Gastrocnemius medialis (tissue), 4 donors: ENCODE measurements at regions of chr1 and their contacts with region 1.

Region 1: GRCh38 chr1:159632922-159633321 is 45.3 kb downstream of the APCS start:
- DNase-seq: no peak
- ATAC-seq: no peak
- H3K4me3 ChIP-seq: no peak overlapping the region
- H3K27ac ChIP-seq: no peak overlapping the region
- H3K4me1 ChIP-seq: no peaks in the 10 kb centered on the region
- H3K27me3 ChIP-seq: no peaks in the 10 kb centered on the region
- CTCF ChIP-seq: no peak
- POLR2A ChIP-seq: no peak

Region 2: GRCh38 chr1:159492575-159493323 is 140.2 kb before region 1 on chr1:
- in situ Hi-C with region 1: no loop called
- intact Hi-C with region 1: no loop called
- DNase-seq: no peak
- ATAC-seq: no peak
- H3K4me3 ChIP-seq: no peak overlapping the region
- H3K27ac ChIP-seq: no peak overlapping the region
- H3K4me1 ChIP-seq: no peaks in the 10 kb centered on the region
- H3K27me3 ChIP-seq: no peaks in the 10 kb centered on the region
- CTCF ChIP-seq: no peak
- POLR2A ChIP-seq: no peak

Region 3: DNA sequence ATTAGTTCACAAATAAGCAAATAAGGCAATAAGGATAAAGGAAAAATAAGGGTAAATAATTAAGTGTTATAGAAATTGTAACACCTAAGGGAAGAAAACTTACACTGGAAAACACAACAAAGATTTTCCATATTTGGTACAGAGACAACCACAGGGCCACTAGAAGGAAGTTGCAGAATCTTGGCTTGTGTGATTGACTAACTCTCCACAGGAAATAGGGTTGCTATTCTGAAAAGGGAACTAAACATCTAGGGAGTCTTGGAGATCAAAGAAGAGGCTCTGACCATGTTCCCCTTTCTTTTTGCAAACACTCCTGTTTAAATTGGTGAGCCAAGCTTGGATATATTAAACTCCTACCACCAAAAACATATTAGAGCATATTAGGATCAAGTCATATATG is 13.8 kb after region 1 on chr1:
- in situ Hi-C with region 1: no loop called
- intact Hi-C with region 1: no loop called
- DNase-seq: no peak
- ATAC-seq: no peak
- H3K4me3 ChIP-seq: no peak overlapping the region
- H3K27ac ChIP-seq: no peak overlapping the region
- H3K4me1 ChIP-seq: no peaks in the 10 kb centered on the region
- H3K27me3 ChIP-seq: no peaks in the 10 kb centered on the region
- CTCF ChIP-seq: no peak
- POLR2A ChIP-seq: no peak

Region 4: DNA sequence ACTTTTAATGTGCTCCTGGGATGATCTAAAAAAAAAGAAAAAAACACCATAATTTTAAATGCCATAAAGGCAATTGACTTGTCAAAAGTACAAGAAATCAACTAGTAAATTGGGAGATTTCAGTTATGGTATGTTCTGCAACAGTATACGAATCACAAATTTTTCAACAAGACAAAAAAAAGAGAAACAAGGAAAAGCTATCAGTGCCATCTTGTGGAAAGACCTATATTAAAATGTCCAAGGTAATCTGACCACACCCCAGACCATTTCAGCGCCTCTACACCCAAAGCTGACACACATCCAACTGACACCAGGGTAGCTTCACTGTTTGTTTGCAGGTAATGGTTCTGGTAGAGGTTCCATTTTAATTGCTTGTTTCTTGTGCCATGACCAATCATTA is 142.8 kb after region 1 on chr1:
- in situ Hi-C with region 1: no loop called
- intact Hi-C with region 1: no loop called
- DNase-seq: no peak
- ATAC-seq: no peak
- H3K4me3 ChIP-seq: no peak overlapping the region
- H3K27ac ChIP-seq: no peak overlapping the region
- H3K4me1 ChIP-seq: peaks cover 15 to 20% of the 10 kb centered on the region in 2 donors
- H3K27me3 ChIP-seq: no peaks in the 10 kb centered on the region
- CTCF ChIP-seq: no peak
- POLR2A ChIP-seq: no peak

Region 5: GRCh38 chr1:159989581-159989980 is 356.7 kb after region 1 on chr1:
- in situ Hi-C with region 1: no loop called
- intact Hi-C with region 1: loop called (anchors 5 kb)
- DNase-seq: no peak
- ATAC-seq: no peak
- H3K4me3 ChIP-seq: no peak overlapping the region
- H3K27ac ChIP-seq: no peak overlapping the region
- H3K4me1 ChIP-seq: no peaks in the 10 kb centered on the region
- H3K27me3 ChIP-seq: peaks cover 0 to 14% (median 0%) of the 10 kb centered on the region in 3 donors
- CTCF ChIP-seq: no peak
- POLR2A ChIP-seq: no peak